ENCODE measurements at regions of chr14 and their contacts with region 1.

Region 1: DNA sequence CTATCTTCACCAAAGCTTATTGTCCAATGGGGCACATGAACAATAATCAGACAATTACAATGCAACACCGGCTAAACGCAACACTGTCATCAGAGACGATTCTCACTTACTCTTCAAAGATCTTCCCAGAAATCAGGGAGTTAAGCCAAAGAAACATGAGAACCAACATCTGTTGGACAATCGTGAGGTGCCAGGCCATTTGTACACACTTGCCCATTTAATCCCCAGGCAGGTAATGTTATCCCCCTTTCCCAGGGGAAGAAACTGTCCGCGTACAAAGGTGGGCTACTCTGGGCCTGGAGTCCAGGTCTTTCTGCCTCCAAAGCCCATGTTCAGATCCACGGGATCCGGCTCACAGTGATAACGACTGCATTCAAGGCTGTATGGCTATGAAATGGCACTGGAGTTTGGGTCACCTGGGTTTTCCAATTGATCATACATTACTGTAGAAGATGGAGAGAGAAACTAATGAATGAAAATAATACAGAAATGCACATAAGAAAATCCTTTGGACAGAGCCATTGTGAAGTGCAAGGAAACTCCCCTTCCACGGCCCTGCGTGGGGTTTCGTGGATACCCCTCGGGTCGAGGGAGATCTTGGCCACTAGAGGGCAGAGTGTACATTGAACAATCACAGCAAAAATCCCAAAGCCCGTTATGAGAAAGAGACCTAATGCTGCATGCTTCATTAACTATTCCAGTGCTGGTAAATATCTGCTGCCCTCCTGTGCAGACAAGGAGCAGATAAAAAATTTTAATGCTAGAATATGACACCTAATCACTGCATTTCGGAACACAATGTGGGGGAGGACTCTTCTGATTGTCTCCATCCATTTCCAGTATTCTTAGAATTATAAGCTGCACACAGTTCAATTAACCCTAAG is 111.4 kb downstream of the EGLN3 start:
- DNase-seq: peak; percentile 60
- CTCF ChIP-seq: peak; percentile 63

Region 2: GRCh38 chr14:33814010-33814409 is 25.4 kb before region 1 on chr14:
- CTCF ChIA-PET with region 1: no interaction called
- POLR2A ChIA-PET with region 1: no interaction called
- DNase-seq: no peak
- CTCF ChIP-seq: no peak

Region 3: GRCh38 chr14:33866425-33867088 is 27.1 kb after region 1 on chr14:
- CTCF ChIA-PET with region 1: no interaction called
- POLR2A ChIA-PET with region 1: no interaction called
- DNase-seq: no peak
- CTCF ChIP-seq: no peak

Region 4: DNA sequence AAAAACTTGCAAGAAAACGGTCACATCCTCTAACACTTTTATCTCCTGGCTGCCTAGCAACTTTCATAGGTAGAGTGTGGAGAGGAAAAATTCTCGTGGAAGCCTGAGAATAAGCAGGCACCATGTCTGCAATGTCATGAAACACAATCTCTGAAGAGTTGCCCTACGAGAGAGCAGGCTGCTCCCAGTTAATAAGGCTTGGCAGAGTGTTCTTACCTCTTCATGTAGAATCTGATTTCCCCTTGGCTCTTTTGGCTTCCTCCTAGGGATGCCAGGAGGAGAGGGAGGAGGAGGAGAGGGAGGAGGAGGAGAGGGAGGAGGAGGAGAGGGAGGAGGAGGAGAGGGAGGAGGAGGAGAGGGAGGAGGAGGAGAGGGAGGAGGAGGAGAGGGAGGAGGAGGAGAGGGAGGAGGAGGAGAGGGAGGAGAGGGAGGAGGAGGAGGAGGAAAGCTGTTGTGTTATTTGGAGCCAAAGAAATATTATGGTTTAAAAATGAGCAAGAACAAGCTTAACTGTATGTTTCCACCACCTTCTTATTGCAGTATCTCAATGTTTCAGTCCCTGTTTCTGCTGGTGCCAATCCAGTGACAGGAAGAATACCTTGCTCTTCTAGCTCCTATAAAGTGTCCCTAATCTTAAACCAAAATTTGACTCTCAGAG is 58.6 kb after region 1 on chr14:
- CTCF ChIA-PET with region 1: no interaction called
- POLR2A ChIA-PET with region 1: no interaction called
- DNase-seq: no peak
- CTCF ChIP-seq: no peak

Region 5: DNA sequence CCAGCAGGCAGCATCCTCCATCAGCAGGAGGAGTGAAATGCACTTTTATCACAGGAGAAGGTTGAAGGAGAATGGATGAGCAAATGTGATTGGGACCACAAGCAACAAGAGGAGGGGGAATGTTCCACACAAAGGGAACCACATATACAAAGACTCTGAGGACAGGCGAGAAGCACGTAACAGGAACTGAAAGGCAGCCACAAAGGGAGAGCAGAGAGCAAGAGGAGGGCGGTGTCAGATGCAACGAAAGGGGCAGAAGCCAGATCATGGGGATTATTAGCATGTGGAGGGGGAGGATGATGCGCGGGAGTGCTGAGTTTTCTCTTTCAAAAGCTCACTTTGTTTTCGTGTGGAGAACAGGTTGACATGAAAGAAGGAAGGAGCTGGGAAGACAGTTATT is 381.5 kb after region 1 on chr14:
- CTCF ChIA-PET with region 1: interaction called, 15 read pairs
- POLR2A ChIA-PET with region 1: no interaction called
- DNase-seq: peak; percentile 46
- CTCF ChIP-seq: no peak

Region 6: DNA sequence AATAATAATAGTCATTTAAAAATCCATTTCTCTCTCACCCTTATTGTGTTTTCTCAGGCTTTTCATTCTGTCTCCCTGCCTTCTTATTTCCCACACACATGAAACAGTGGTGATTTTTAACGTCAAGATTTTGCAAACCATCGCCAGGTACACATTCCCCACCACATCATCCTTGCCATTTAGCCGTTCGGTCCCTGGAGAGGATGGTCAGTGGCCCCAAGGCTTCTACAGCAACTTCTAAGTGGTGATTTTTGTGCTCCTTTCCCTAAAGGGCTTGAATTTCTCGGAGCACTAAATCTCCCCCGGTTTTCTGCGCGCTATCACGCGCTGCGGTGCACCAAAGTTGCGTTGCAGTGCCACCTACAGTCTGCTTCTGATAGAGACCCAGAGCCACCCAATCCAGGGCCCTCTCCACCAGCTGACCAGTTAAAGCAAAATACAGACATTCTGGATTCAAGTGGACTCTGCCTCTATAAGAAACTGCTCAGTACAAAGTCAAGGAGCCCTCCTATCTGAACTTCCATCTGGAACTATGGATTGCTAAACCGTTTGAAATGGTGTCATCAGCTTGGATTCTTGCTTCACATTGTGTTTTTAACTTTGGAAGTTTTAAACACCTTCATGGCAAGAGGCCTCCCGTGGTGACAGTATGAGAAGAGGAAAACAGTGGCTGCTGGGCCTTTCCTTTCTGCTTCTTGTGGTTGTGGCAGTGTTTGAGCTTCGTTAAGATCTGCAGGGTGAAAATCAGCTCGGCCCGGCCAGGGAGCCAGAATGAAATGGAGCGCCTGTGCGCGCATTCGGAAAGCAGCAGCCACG is 388.6 kb after region 1 on chr14:
- CTCF ChIA-PET with region 1: interaction called, 31 read pairs
- POLR2A ChIA-PET with region 1: no interaction called
- DNase-seq: peak; percentile 73
- CTCF ChIP-seq: peak; percentile 77